H1 (cell line): ENCODE measurements at regions of chr6 and their contacts with region 1.

Region 1: GRCh38 chr6:39865011-39865888 is 69.0 kb downstream of the MOCS1 start:
- DNase-seq: peak; percentile 13 to 95
- H3K4me3 ChIP-seq: no peak overlapping the region
- H3K27ac ChIP-seq: no peak overlapping the region
- H3K4me1 ChIP-seq: peaks cover 0 to 6% (median 3%) of the 10 kb centered on the region in 4 experiments; a peak in 3 of 7 replicates
- H3K27me3 ChIP-seq: no peaks in the 10 kb centered on the region
- CTCF ChIP-seq: peak; percentile 82 to 90 (median 88)
- EP300 ChIP-seq: no peak
- POLR2A ChIP-seq: no peak
- RAD21 ChIP-seq: peak; percentile 66 to 76

Region 2: DNA sequence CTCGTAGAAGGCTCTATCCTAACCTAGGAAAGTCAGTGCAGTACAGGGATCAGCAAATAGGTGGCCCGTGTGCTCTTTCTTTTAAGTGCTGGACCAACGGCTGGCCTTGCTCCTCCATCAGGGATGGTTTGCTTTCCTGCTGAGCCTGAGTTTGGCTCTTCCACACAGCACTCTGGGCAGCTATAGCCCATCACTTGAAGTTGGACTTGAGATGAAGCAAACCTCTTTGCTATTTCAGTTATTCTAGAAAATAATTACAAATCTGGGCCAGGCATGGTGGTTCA is 475.8 kb before region 1 on chr6:
- CTCF ChIA-PET with region 1: interaction called, 12 read pairs
- POLR2A ChIA-PET with region 1: no interaction called
- DNase-seq: no peak
- H3K4me3 ChIP-seq: no peak overlapping the region
- H3K27ac ChIP-seq: no peak overlapping the region
- H3K4me1 ChIP-seq: no peaks in the 10 kb centered on the region
- H3K27me3 ChIP-seq: no peaks in the 10 kb centered on the region
- CTCF ChIP-seq: peak; percentile 46 to 71 (median 61)
- EP300 ChIP-seq: no peak
- POLR2A ChIP-seq: no peak
- RAD21 ChIP-seq: peak; percentile 81 to 88

Region 3: GRCh38 chr6:39634646-39635341 is 230.5 kb before region 1 on chr6:
- CTCF ChIA-PET with region 1: no interaction called
- POLR2A ChIA-PET with region 1: no interaction called
- DNase-seq: no peak
- H3K4me3 ChIP-seq: no peak overlapping the region
- H3K27ac ChIP-seq: no peak overlapping the region
- H3K4me1 ChIP-seq: no peaks in the 10 kb centered on the region
- H3K27me3 ChIP-seq: peaks cover 0 to 1% (median 0%) of the 10 kb centered on the region in 4 experiments; a peak in 1 of 7 replicates
- CTCF ChIP-seq: no peak
- EP300 ChIP-seq: no peak
- POLR2A ChIP-seq: no peak
- RAD21 ChIP-seq: no peak

Region 4: GRCh38 chr6:39843305-39844020 is 21.8 kb before region 1 on chr6:
- CTCF ChIA-PET with region 1: interaction called, 11 read pairs
- POLR2A ChIA-PET with region 1: no interaction called
- DNase-seq: no peak
- H3K4me3 ChIP-seq: no peak overlapping the region
- H3K27ac ChIP-seq: no peak overlapping the region
- H3K4me1 ChIP-seq: peaks cover 0 to 4% (median 0%) of the 10 kb centered on the region in 4 experiments; a peak in 3 of 7 replicates
- H3K27me3 ChIP-seq: no peaks in the 10 kb centered on the region
- CTCF ChIP-seq: peak in 2 of 3 experiments; percentile 20 to 40; a peak in 2 of 4 replicates
- EP300 ChIP-seq: no peak
- POLR2A ChIP-seq: no peak
- RAD21 ChIP-seq: no peak

Region 5: GRCh38 chr6:39882531-39882899 is 17.3 kb after region 1 on chr6:
- CTCF ChIA-PET with region 1: interaction called, 135 read pairs
- POLR2A ChIA-PET with region 1: no interaction called
- DNase-seq: no peak
- H3K4me3 ChIP-seq: no peak overlapping the region
- H3K27ac ChIP-seq: no peak overlapping the region
- H3K4me1 ChIP-seq: no peaks in the 10 kb centered on the region
- H3K27me3 ChIP-seq: no peaks in the 10 kb centered on the region
- CTCF ChIP-seq: no peak
- EP300 ChIP-seq: no peak
- POLR2A ChIP-seq: no peak
- RAD21 ChIP-seq: no peak

Region 6: GRCh38 chr6:39904946-39905639 is 39.8 kb after region 1 on chr6:
- CTCF ChIA-PET with region 1: interaction called, 20 read pairs
- POLR2A ChIA-PET with region 1: no interaction called
- DNase-seq: no peak
- H3K4me3 ChIP-seq: no peak overlapping the region
- H3K27ac ChIP-seq: no peak overlapping the region
- H3K4me1 ChIP-seq: peaks cover 0 to 2% (median 0%) of the 10 kb centered on the region in 4 experiments; a peak in 1 of 7 replicates
- H3K27me3 ChIP-seq: 0 out of 7 replicates have a peak, but pooled peaks cover 0 to 2% (median 0%) of the 10 kb centered on the region in 4 experiments
- CTCF ChIP-seq: peak in 2 of 3 experiments; percentile 14 to 17; a peak in 1 of 4 replicates
- EP300 ChIP-seq: no peak
- POLR2A ChIP-seq: no peak
- RAD21 ChIP-seq: no peak; a peak in 1 of 4 replicates

Region 7: GRCh38 chr6:39965751-39966150 is 100.5 kb after region 1 on chr6:
- CTCF ChIA-PET with region 1: no interaction called
- POLR2A ChIA-PET with region 1: no interaction called
- DNase-seq: no peak
- H3K4me3 ChIP-seq: no peak overlapping the region
- H3K27ac ChIP-seq: no peak overlapping the region
- H3K4me1 ChIP-seq: no peaks in the 10 kb centered on the region
- H3K27me3 ChIP-seq: no peaks in the 10 kb centered on the region
- CTCF ChIP-seq: no peak
- EP300 ChIP-seq: no peak
- POLR2A ChIP-seq: no peak
- RAD21 ChIP-seq: no peak

Region 8: DNA sequence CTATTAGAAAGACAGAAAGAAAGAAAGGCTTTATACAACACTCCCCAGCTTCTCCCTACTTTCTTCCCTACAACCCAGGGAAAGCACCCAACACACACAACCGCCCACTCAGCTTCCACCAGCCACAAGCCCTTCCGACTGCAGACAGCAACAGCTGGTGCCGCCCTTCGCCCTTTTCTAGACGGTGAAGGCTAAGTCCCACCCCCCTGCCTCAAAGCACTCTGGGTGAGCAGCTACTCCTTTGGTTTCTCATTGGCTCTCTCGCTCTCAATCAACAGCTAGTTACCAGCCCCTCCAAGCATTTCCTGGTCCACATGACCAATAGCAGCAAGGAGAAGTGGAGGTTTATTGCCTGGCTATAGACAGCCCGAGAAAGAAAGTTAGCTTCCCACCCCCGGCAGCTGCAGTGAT is 299.1 kb after region 1 on chr6:
- CTCF ChIA-PET with region 1: no interaction called
- POLR2A ChIA-PET with region 1: no interaction called
- DNase-seq: peak in 1 of 2 experiments; percentile 52
- H3K4me3 ChIP-seq: no peak overlapping the region
- H3K27ac ChIP-seq: no peak overlapping the region
- H3K4me1 ChIP-seq: peaks cover 0 to 3% (median 2%) of the 10 kb centered on the region in 4 experiments; a peak in 2 of 7 replicates
- H3K27me3 ChIP-seq: no peaks in the 10 kb centered on the region
- CTCF ChIP-seq: no peak
- EP300 ChIP-seq: no peak
- POLR2A ChIP-seq: no peak
- RAD21 ChIP-seq: no peak